ENCODE measurements at regions of chr7 and their contacts with region 1.

Region 1: DNA sequence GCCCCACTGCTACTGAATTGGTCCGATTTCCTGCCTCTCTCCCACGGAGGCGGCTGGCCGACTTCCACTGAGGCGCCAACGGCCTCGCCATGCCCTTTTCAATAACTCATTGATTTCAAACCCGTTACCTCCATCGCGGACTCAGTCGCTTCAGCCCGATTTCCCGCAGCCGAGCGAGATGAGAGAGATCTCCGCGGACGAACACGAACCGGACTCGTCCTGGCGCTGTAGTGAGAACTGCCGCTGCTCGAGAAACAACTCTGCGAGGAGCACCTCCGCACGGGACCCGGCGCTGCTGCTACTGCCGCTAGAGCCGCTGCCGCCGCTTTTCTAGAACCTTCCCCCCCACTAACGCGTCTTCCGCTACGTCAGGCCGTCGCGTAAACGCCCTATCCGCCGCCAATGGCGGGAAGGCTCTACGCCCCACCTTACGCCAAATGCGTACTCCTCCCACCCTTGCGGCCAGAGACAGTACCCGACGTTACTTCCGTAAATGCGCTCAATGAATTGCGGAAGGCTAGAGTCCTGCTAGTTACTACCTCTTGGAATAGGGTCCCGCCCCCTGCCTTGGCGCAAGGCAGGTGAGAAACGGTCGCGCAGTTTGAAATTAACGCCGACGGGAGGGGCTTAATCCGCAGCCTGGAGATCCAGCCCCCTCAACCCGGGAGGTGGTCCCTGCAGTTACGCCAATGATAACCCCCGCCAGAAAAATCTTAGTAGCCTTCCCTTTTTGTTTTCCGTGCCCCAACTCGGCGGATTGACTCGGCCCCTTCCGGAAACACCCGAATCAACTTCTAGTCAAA is at the start of gene HNRNPA2B1:
- DNase-seq: peak; percentile 98
- ATAC-seq: peak; percentile 75
- H3K4me3 ChIP-seq: peak within 1 kb of the TSS; percentile 98
- H3K27ac ChIP-seq: peak within 1 kb of the TSS; percentile 96
- H3K4me1 ChIP-seq: 0 out of 2 replicates have a peak, but pooled peaks cover 3% of the 10 kb centered on the region
- H3K27me3 ChIP-seq: no peaks in the 10 kb centered on the region
- CTCF ChIP-seq: no peak
- EP300 ChIP-seq: no peak
- POLR2A ChIP-seq: peak; percentile 100
- RAD21 ChIP-seq: no peak
- polyA plus RNA-seq, gene HNRNPA2B1: 726 to 1,124 TPM

Region 2: DNA sequence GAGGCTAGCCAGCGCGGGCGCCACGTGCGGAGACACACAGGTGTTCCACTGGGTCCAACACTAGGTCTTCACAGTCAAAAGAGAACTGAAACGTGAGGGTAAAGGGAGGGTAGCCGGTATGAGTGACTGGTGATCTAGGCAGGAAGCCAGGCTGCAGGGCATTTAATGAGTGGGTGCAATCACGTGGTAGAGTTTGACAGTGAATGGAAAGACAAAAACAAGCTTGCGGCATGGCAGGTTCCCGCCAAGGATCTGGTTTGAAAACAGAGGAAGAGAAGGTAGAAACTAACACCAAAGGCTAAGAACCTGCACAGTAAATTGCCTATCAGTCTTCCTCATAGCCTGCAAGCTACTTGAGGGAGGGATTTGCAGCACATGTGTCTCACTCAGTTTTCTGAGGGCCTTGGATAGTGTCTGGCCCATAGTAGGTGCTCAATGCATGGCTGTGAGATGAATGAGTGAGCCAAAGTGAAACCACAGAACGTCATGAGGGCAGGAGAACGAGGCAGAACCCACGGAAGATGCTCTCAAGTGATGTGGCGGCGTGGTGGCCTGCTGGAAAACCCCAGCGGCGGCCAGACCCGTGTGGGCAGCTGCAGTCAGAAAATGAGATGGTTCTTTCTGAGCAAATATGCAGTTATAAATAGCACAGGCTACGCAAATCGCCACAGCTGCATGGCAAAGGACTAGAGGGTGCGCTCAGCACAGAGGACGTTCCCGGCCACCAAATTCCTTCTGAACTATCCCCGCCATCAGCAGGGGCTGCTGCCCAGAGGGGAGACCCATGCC is 232.2 kb before region 1 on chr7:
- CTCF ChIA-PET with region 1: interaction called, 6 read pairs
- POLR2A ChIA-PET with region 1: interaction called, 5 read pairs
- RAD21 ChIA-PET with region 1: interaction called, 4 read pairs
- SMC1A ChIA-PET with region 1: interaction called, 7 read pairs
- in situ Hi-C with region 1: loop called (anchors 5 kb)
- intact Hi-C with region 1: loop called (anchors 2 kb)
- DNase-seq: peak; percentile 98
- ATAC-seq: peak; percentile 75
- H3K4me3 ChIP-seq: peak overlapping the region; percentile 31; the same call in 1 of the 2 replicates
- H3K27ac ChIP-seq: peak overlapping the region; percentile 91
- H3K4me1 ChIP-seq: peaks cover 54% of the 10 kb centered on the region
- H3K27me3 ChIP-seq: no peaks in the 10 kb centered on the region
- CTCF ChIP-seq: peak; percentile 5 to 23 (median 10); a peak in 1 of 6 replicates
- EP300 ChIP-seq: peak; percentile 94 to 95
- POLR2A ChIP-seq: peak; percentile 54; the same call in 1 of the 2 replicates
- RAD21 ChIP-seq: 0 out of 2 replicates have a peak, but pooled peaks have one; percentile 19

Region 3: GRCh38 chr7:26167301-26167934 is 33.2 kb before region 1 on chr7:
- CTCF ChIA-PET with region 1: interaction called, 29 read pairs
- POLR2A ChIA-PET with region 1: interaction called, 206 read pairs
- RAD21 ChIA-PET with region 1: interaction called, 164 read pairs
- SMC1A ChIA-PET with region 1: interaction called, 198 read pairs
- in situ Hi-C with region 1: no loop called
- intact Hi-C with region 1: no loop called
- DNase-seq: no peak
- ATAC-seq: peak; percentile 94
- H3K4me3 ChIP-seq: 0 out of 2 replicates have a peak overlapping the region, but pooled peaks have one; percentile 31
- H3K27ac ChIP-seq: peak overlapping the region; percentile 43
- H3K4me1 ChIP-seq: peaks cover 17% of the 10 kb centered on the region
- H3K27me3 ChIP-seq: no peaks in the 10 kb centered on the region
- CTCF ChIP-seq: no peak
- EP300 ChIP-seq: no peak
- POLR2A ChIP-seq: no peak
- RAD21 ChIP-seq: no peak

Region 4: DNA sequence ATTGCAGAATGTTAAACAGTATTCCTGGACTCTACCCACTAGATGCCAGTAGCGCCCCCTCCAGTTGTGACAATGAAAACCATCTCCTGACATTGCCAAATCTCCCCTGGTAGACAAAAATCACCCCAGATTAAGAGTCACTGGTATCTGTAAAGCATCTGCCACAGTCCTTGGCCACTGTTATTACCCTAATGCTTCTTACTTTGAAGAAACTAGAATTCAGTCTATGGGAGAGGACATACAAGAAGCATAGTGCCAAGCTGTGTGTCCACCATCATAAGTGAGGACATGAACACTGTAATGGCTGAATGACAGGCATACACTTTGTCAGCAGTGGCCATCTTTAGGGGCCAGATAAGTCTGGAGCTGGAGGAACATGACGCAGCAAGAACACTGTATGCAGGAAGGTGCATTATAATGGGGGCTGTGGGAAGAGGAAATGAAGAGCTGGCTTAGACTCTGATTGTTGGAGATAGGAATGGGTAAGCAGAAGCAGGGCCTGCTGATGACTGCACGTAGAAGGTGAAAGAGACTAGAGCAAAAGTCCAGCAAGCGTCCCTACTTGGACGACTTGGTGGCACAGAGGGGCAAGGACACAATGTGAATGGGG is 33.4 kb after region 1 on chr7:
- CTCF ChIA-PET with region 1: no interaction called
- POLR2A ChIA-PET with region 1: no interaction called
- RAD21 ChIA-PET with region 1: no interaction called
- SMC1A ChIA-PET with region 1: no interaction called
- in situ Hi-C with region 1: no loop called
- intact Hi-C with region 1: no loop called
- DNase-seq: no peak
- ATAC-seq: no peak
- H3K4me3 ChIP-seq: no peak overlapping the region
- H3K27ac ChIP-seq: no peak overlapping the region
- H3K4me1 ChIP-seq: no peaks in the 10 kb centered on the region
- H3K27me3 ChIP-seq: no peaks in the 10 kb centered on the region; a peak in 1 of 4 replicates
- CTCF ChIP-seq: no peak
- EP300 ChIP-seq: no peak
- POLR2A ChIP-seq: no peak
- RAD21 ChIP-seq: no peak

Region 5: GRCh38 chr7:26284995-26285632 is 84.5 kb after region 1 on chr7:
- CTCF ChIA-PET with region 1: interaction called, 12 read pairs
- POLR2A ChIA-PET with region 1: interaction called, 3 read pairs
- RAD21 ChIA-PET with region 1: interaction called, 7 read pairs
- SMC1A ChIA-PET with region 1: interaction called, 8 read pairs
- in situ Hi-C with region 1: loop called (anchors 5 kb)
- intact Hi-C with region 1: no loop called
- DNase-seq: no peak
- ATAC-seq: peak; percentile 80
- H3K4me3 ChIP-seq: no peak overlapping the region
- H3K27ac ChIP-seq: no peak overlapping the region
- H3K4me1 ChIP-seq: no peaks in the 10 kb centered on the region
- H3K27me3 ChIP-seq: no peaks in the 10 kb centered on the region
- CTCF ChIP-seq: peak in 2 of 3 experiments; percentile 29 to 30; a peak in 2 of 6 replicates
- EP300 ChIP-seq: no peak
- POLR2A ChIP-seq: no peak
- RAD21 ChIP-seq: peak; percentile 38; the same call in 1 of the 2 replicates

Region 6: GRCh38 chr7:26346611-26347203 is 146.1 kb after region 1 on chr7:
- CTCF ChIA-PET with region 1: interaction called, 7 read pairs
- POLR2A ChIA-PET with region 1: interaction called, 4 read pairs
- RAD21 ChIA-PET with region 1: interaction called, 7 read pairs
- SMC1A ChIA-PET with region 1: interaction called, 14 read pairs
- in situ Hi-C with region 1: no loop called
- intact Hi-C with region 1: no loop called
- DNase-seq: no peak
- ATAC-seq: peak; percentile 35
- H3K4me3 ChIP-seq: no peak overlapping the region
- H3K27ac ChIP-seq: no peak overlapping the region
- H3K4me1 ChIP-seq: peaks cover 14% of the 10 kb centered on the region
- H3K27me3 ChIP-seq: no peaks in the 10 kb centered on the region
- CTCF ChIP-seq: no peak
- EP300 ChIP-seq: no peak
- POLR2A ChIP-seq: no peak
- RAD21 ChIP-seq: no peak